Ovary (tissue), 10 donors: ENCODE measurements at regions of chr6 and their contacts with region 1.

Region 1: DNA sequence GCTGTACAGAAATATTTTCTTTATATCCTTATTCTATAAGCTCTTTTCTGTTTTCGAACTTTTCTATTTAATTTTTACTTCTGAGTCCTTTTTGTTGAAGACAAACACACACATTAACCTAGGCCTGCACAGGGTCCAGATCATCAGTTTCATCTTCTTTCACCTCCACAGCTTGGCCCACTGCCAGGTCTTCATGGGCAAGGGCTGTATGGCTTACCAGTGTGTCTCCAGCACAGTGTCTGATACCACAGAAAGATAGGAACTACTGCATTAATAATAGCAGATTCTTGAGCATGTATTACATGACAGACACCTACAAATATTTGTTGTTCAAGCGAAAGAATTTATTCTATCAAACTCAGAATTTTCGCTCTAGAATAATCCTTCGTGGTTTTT is 24.4 kb downstream of the QKI start:
- DNase-seq: peak in 1 of 5 donors; percentile 37
- H3K4me3 ChIP-seq: no peak overlapping the region
- H3K27ac ChIP-seq: no peak overlapping the region
- H3K4me1 ChIP-seq: peaks cover 5% of the 10 kb centered on the region
- H3K27me3 ChIP-seq: no peaks in the 10 kb centered on the region
- CTCF ChIP-seq: no peak
- EP300 ChIP-seq: no peak
- POLR2A ChIP-seq: no peak

Region 2: DNA sequence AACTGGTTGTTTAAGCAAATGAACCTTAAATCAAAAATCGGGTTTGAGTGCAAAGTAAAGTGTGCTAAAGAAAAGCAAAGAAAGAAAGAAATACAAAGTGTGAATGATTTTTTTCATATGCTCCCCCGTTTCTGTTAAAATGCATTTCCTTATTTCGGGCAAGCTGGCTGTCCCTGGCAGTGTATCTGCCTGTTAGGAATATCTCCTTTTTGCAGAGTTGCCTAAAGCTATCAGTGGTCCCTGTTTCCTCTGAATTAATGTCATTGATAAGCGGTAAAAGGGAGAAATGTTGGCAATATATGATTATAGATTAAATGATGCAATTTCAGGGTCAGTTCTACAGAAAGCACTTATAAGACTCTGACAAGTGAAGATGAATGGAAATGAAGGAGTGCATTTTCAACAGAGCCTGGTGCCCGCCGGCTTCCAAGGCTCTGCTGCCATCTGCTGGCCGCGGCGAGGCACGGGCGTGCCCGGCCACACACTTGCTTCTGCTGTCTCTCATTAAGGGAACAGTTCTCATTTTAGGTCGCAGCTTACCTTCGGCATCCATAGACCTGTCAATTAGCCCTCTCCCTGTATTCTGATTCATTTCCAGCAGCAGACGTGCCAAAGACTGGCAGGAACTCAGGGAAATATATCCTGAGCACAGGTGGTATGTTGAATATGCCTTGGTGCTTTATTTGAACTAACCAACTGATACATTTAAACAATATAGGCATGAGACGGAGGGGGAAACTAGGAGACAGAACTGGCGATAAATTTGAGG is 1488.5 kb after region 1 on chr6:
- intact Hi-C with region 1: loop called in 1 of 4 experiments (anchors 10 kb)
- DNase-seq: peak; percentile 24 to 79 (median 62)
- H3K4me3 ChIP-seq: no peak overlapping the region
- H3K27ac ChIP-seq: no peak overlapping the region
- H3K4me1 ChIP-seq: no peaks in the 10 kb centered on the region
- H3K27me3 ChIP-seq: no peaks in the 10 kb centered on the region
- CTCF ChIP-seq: peak; percentile 55 to 66 (median 56)
- EP300 ChIP-seq: no peak
- POLR2A ChIP-seq: no peak